MCF 10A (cell line): ENCODE measurements at regions of chr22 and their contacts with region 1.

Region 1: DNA sequence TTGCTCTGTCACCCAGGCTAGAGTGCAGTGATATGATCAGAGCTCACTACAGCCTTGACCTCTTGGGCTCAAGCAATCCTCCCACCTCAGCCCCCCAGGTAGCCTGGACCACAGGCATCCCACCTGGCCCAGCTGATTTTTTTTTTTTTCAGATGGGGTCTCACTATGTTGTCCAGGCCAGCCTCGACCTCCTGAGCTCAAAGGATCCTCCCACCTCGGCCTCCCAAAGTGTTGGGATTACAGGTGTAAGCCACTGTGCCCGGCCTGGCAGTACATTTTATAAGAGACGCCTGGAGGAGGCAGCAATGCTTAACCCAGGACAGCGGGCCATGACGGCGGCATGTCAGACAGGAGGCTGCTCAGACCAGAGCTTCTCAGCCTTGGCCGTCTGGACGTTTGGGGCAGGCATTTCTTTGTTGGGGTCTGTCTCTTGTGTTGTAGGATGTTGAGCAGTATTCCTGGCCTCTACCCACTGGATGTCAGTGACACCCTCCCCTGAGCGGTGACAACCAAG is 4.3 kb downstream of the LGALS2 start:
- DNase-seq: no peak
- H3K4me3 Mint-ChIP-seq: no peak overlapping the region
- H3K27ac Mint-ChIP-seq: no peak overlapping the region
- H3K4me1 Mint-ChIP-seq: peaks cover 3% of the 10 kb centered on the region
- H3K27me3 Mint-ChIP-seq: no peaks in the 10 kb centered on the region
- CTCF ChIP-seq: no peak

Region 2: GRCh38 chr22:36971341-36972125 is 604.0 kb before region 1 on chr22:
- CTCF ChIA-PET with region 1: no interaction called
- POLR2A ChIA-PET with region 1: no interaction called
- intact Hi-C with region 1: no loop called
- DNase-seq: no peak
- H3K4me3 Mint-ChIP-seq: no peak overlapping the region
- H3K27ac Mint-ChIP-seq: no peak overlapping the region
- H3K4me1 Mint-ChIP-seq: no peaks in the 10 kb centered on the region
- H3K27me3 Mint-ChIP-seq: peaks cover 11% of the 10 kb centered on the region
- CTCF ChIP-seq: no peak

Region 3: GRCh38 chr22:37538590-37539357 is 36.8 kb before region 1 on chr22:
- CTCF ChIA-PET with region 1: interaction called, 667 read pairs
- POLR2A ChIA-PET with region 1: interaction called, 5 read pairs
- intact Hi-C with region 1: no loop called
- DNase-seq: peak; percentile 95
- H3K4me3 Mint-ChIP-seq: no peak overlapping the region
- H3K27ac Mint-ChIP-seq: peak overlapping the region; percentile 34
- H3K4me1 Mint-ChIP-seq: peaks cover 32% of the 10 kb centered on the region
- H3K27me3 Mint-ChIP-seq: no peaks in the 10 kb centered on the region
- CTCF ChIP-seq: peak; percentile 97